GM12878 (cell line): ENCODE measurements at regions of chr15 and their contacts with region 1.

Region 1: DNA sequence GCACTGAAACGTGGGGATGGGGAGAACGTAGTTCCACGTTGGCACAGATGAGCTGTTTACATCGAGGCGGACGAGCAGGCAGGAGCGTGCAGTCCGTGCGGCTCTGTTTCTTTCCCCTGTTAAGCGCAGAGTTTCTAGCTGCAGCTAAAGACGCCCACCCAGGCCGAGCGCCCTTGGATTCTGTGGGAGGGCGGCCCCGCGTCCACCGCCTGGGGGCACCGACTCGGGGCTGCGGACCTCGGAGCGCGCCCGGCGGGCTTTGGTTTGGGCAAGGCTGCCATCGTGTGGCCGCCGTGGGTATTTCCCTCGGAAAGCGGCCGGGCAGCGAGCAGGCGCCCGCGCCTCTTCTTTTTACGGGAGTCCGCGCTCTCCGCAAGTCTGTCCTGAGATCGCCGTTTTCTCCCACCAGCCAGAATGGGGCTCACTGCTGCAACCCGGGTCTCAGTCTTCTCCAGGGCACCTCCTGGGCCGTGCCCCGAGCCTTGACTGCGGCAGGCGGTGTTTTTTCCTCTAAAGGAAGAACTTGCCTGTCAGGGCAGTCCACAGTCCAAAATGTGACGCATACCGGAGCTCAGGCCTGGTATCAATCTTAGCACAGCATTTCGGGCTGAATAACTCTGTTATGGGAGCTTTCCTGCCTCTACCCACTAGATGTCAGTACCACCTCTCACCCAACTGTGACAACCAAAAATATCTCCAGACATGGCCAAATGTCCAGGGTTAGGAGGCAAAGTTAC is 219.9 kb upstream of the IGF1R start:
- DNase-seq: no peak
- ATAC-seq: peak; percentile 96
- H3K4me3 ChIP-seq: no peak overlapping the region
- H3K27ac ChIP-seq: no peak overlapping the region
- H3K4me1 ChIP-seq: no peaks in the 10 kb centered on the region
- H3K27me3 ChIP-seq: peaks cover 0 to 4% of the 10 kb centered on the region in 2 experiments; a peak in 2 of 4 replicates
- CTCF ChIP-seq: peak; percentile 59 to 74 (median 60)
- EP300 ChIP-seq: no peak
- POLR2A ChIP-seq: no peak
- RAD21 ChIP-seq: peak; percentile 37

Region 2: GRCh38 chr15:98311566-98312188 is 116.7 kb before region 1 on chr15:
- CTCF ChIA-PET with region 1: interaction called, 56 read pairs
- POLR2A ChIA-PET with region 1: no interaction called
- RAD21 ChIA-PET with region 1: interaction called, 4 read pairs
- SMC1A ChIA-PET with region 1: interaction called, 6 read pairs
- in situ Hi-C with region 1: loop called (anchors 5 kb)
- intact Hi-C with region 1: no loop called
- DNase-seq: peak; percentile 9
- ATAC-seq: peak; percentile 66
- H3K4me3 ChIP-seq: no peak overlapping the region
- H3K27ac ChIP-seq: no peak overlapping the region
- H3K4me1 ChIP-seq: no peaks in the 10 kb centered on the region
- H3K27me3 ChIP-seq: no peaks in the 10 kb centered on the region
- CTCF ChIP-seq: peak; percentile 67 to 78 (median 74)
- EP300 ChIP-seq: no peak
- POLR2A ChIP-seq: no peak
- RAD21 ChIP-seq: peak; percentile 62

Region 3: DNA sequence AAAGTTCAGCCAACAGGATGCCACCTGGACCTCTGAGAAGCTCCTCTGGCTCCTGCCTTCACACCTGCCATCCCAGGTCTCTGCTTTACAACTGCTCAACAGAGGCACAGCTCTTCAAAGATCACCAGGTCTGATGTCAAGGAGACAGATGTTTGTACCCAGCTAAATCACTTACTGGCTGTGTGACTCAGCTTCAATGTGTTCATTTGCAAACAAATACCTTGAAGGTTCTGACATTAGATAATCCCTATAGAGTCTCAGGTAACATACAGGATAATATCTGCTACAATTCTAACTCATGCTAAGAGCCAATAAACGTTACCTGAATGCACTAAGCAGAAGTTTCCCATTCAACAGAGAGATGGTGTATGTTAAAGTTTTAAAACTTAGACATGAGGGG is 56.5 kb after region 1 on chr15:
- CTCF ChIA-PET with region 1: no interaction called
- POLR2A ChIA-PET with region 1: no interaction called
- RAD21 ChIA-PET with region 1: no interaction called
- SMC1A ChIA-PET with region 1: no interaction called
- in situ Hi-C with region 1: no loop called
- intact Hi-C with region 1: no loop called
- DNase-seq: no peak
- ATAC-seq: no peak
- H3K4me3 ChIP-seq: no peak overlapping the region
- H3K27ac ChIP-seq: no peak overlapping the region
- H3K4me1 ChIP-seq: no peaks in the 10 kb centered on the region
- H3K27me3 ChIP-seq: no peaks in the 10 kb centered on the region
- CTCF ChIP-seq: no peak
- EP300 ChIP-seq: no peak
- POLR2A ChIP-seq: no peak
- RAD21 ChIP-seq: no peak